Psoas muscle (tissue), 8 donors: ENCODE measurements at regions of chr12 and their contacts with region 1.

Region 1: DNA sequence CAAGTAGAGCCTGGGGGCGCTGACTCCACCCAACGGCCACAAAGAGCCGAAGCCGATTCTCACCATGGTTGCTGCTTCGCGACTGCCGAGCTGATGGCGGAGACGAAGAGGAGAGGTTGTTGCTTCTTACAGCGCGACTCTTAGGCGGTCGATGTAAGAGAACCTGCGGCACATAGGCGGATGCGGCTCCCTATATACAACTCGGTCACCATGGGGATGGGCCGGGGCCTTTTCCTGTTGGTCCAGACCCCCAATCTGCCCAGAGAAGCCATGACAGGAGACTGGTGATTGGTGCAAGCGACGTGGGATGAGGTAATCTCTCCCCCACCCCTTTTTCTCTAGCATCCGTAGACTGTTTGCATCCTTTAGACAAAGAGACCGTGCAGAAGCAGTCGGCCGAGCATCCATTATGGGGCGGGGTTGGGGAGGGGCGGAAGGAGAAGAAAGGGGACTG is at the start of gene TUBA1A:
- DNase-seq: peak; percentile 86 to 91
- ATAC-seq: peak; percentile 80 to 87 (median 84)
- H3K4me3 ChIP-seq: peak within 1 kb of the TSS; percentile 91
- H3K27ac ChIP-seq: peak within 1 kb of the TSS; percentile 86
- H3K4me1 ChIP-seq: peaks cover 9% of the 10 kb centered on the region
- H3K27me3 ChIP-seq: peaks cover 0 to 26% (median 3%) of the 10 kb centered on the region in 3 donors
- CTCF ChIP-seq: no peak
- total RNA-seq, gene TUBA1A: 21.3 to 29.8 (median 29.0) TPM

Region 2: DNA sequence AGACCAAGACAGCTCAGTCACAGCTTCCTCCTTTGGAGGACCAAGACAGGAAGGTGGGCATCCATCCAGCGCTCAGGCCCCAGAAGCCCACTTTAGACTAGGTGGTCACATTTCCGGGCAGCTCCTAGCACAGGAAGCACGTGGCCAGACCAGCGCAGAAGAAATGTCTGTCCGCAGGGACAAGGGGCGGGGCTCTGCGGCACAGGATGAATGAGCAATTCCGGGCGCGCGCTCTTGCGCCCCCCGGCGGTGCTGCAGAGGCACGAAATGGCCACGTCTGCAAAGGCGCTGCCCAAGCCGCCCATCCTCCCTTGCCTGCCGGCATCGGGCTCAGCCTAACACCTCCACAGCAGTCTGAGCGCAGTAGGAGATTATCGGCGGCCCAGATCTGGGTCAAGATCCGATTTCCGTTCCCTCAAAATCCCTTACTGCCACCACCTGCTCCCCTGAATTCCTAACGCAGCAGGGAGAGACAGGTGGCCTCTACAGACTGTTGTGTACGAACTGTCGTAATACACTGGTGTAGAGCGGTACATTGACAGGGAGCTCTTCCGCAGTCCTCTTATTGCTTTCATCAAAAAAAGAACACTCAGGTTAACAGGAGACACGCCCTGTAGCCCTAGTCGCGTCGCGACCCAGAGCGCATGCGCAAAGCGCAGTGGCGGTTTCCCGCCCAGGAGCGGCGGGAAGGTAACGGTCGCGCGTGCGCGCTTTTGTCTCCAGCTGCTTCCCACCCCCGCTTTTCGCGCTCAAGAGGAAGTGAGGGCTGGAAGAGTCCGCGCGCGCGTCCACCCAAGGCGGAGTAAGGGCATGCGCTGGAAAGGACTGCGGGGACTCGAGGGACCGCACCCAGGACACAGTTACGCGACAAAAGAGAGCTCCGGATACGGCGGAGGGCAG is 58.5 kb before region 1 on chr12:
- intact Hi-C with region 1: loop called in 1 of 2 experiments (anchors 2 kb)
- DNase-seq: peak; percentile 94 to 96
- ATAC-seq: peak; percentile 81 to 90 (median 83)
- H3K4me3 ChIP-seq: peak overlapping the region; percentile 89
- H3K27ac ChIP-seq: peak overlapping the region; percentile 97
- H3K4me1 ChIP-seq: peaks cover 16% of the 10 kb centered on the region
- H3K27me3 ChIP-seq: no peaks in the 10 kb centered on the region
- CTCF ChIP-seq: peak; percentile 79

Region 3: GRCh38 chr12:49161092-49161795 is 27.7 kb before region 1 on chr12:
- intact Hi-C with region 1: no loop called
- DNase-seq: no peak
- ATAC-seq: no peak
- H3K4me3 ChIP-seq: no peak overlapping the region
- H3K27ac ChIP-seq: no peak overlapping the region
- H3K4me1 ChIP-seq: no peaks in the 10 kb centered on the region
- H3K27me3 ChIP-seq: no peaks in the 10 kb centered on the region
- CTCF ChIP-seq: no peak

Region 4: DNA sequence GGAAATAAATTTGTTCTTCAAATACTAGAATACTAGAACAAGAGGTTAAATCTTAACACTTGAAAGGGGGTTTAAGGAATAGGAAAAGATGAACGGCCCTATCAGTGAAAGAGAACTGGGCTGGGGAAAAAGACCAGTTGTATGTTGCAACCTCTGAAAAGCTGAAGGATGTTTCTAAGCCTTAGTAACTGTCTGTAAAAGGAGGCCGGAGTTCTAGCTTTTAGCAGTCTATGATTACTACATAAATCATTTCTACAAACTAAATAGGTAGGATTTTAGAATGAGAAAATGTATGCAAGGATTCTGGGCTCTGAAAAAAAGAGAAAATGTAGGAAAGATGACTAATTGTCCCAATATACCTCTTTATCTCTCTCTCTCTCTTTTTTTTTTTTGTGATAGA is 973.3 kb after region 1 on chr12:
- intact Hi-C with region 1: no loop called
- DNase-seq: no peak
- ATAC-seq: no peak
- H3K4me3 ChIP-seq: no peak overlapping the region
- H3K27ac ChIP-seq: no peak overlapping the region
- H3K4me1 ChIP-seq: no peaks in the 10 kb centered on the region
- H3K27me3 ChIP-seq: no peaks in the 10 kb centered on the region
- CTCF ChIP-seq: no peak